ENCODE measurements at regions of chr3 and their contacts with region 1.

Region 1: GRCh38 chr3:52313774-52314188 is 2.3 kb upstream of the DNAH1 start:
- DNase-seq: no peak
- H3K4me3 ChIP-seq: no peak overlapping the region
- H3K27ac ChIP-seq: peak overlapping the region; percentile 61 to 85
- H3K4me1 ChIP-seq: peaks cover 24 to 83% of the 10 kb centered on the region in 2 experiments
- H3K27me3 ChIP-seq: no peaks in the 10 kb centered on the region
- CTCF ChIP-seq: no peak
- EP300 ChIP-seq: no peak
- RAD21 ChIP-seq: no peak

Region 2: GRCh38 chr3:52299879-52300611 is 13.7 kb before region 1 on chr3:
- CTCF ChIA-PET with region 1: interaction called, 25 read pairs
- POLR2A ChIA-PET with region 1: interaction called, 7 read pairs
- DNase-seq: peak; percentile 76
- H3K4me3 ChIP-seq: no peak overlapping the region
- H3K27ac ChIP-seq: peak overlapping the region; percentile 60 to 91
- H3K4me1 ChIP-seq: peaks cover 17 to 75% of the 10 kb centered on the region in 2 experiments; a peak in 2 of 4 replicates
- H3K27me3 ChIP-seq: no peaks in the 10 kb centered on the region
- CTCF ChIP-seq: peak; percentile 28; the same call in 1 of the 2 replicates
- EP300 ChIP-seq: no peak
- RAD21 ChIP-seq: 0 out of 2 replicates have a peak, but pooled peaks have one; percentile 28

Region 3: GRCh38 chr3:52324676-52325075 is 10.9 kb after region 1 on chr3:
- CTCF ChIA-PET with region 1: no interaction called
- POLR2A ChIA-PET with region 1: no interaction called
- DNase-seq: no peak
- H3K4me3 ChIP-seq: no peak overlapping the region
- H3K27ac ChIP-seq: peak overlapping the region in 1 of 2 experiments; percentile 12; a peak in 1 of 4 replicates
- H3K4me1 ChIP-seq: peaks cover 0 to 21% of the 10 kb centered on the region in 2 experiments; a peak in 1 of 4 replicates
- H3K27me3 ChIP-seq: no peaks in the 10 kb centered on the region
- CTCF ChIP-seq: no peak
- EP300 ChIP-seq: no peak
- RAD21 ChIP-seq: no peak

Region 4: DNA sequence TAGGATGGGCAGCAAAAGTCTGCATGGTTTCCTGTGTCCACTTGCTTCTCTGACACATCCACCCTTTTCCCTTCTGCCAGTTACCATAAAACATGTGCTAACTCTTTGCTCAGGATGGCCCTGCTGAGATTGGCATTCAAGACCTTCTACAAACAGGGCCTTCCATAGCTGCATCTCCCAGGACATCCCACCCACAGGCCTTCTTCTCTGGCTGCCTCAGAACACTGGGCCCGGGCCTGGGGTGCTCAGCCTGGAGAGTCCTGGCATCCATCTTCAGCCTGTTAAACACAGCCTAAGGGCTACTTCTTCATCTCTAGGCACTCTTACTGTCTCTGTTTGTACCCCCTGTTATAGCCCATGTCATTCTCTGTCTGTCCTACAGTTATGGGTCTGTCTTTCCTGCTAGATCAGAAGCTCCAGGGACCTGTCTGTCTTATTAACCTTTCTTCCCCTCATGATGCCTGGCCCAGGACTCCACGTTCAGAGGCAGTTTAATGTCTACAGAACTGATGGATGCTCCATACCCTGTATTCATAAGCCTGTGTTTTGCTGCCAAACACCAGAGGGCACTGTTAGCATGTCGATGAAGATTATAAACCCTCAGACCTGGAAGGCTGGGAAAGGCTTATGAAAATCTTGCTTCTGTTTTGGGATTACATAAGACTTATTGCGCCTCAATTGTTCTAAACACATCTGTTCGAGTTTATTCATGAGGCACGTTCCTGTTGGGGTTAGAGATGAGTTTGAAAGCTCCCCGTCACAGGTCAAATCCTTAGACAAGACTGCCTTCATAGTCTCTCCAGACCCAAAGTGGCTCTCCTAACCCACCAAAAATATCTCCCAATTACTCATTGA is 114.6 kb after region 1 on chr3:
- CTCF ChIA-PET with region 1: no interaction called
- POLR2A ChIA-PET with region 1: no interaction called
- DNase-seq: peak; percentile 70
- H3K4me3 ChIP-seq: no peak overlapping the region; a peak in 1 of 4 replicates
- H3K27ac ChIP-seq: no peak overlapping the region
- H3K4me1 ChIP-seq: peaks cover 0 to 3% of the 10 kb centered on the region in 2 experiments; a peak in 1 of 4 replicates
- H3K27me3 ChIP-seq: no peaks in the 10 kb centered on the region
- CTCF ChIP-seq: peak; percentile 85
- EP300 ChIP-seq: no peak
- RAD21 ChIP-seq: peak; percentile 85

Measured in SK-N-SH (cell line).